ENCODE measurements at regions of chr9 and their contacts with region 1.

Region 1: GRCh38 chr9:31715250-31715649 is 669.2 kb upstream of the ACO1 start:
- DNase-seq: no peak
- H3K4me3 ChIP-seq: no peak overlapping the region
- H3K27ac ChIP-seq: no peak overlapping the region
- H3K4me1 ChIP-seq: no peaks in the 10 kb centered on the region
- CTCF ChIP-seq: no peak

Region 2: DNA sequence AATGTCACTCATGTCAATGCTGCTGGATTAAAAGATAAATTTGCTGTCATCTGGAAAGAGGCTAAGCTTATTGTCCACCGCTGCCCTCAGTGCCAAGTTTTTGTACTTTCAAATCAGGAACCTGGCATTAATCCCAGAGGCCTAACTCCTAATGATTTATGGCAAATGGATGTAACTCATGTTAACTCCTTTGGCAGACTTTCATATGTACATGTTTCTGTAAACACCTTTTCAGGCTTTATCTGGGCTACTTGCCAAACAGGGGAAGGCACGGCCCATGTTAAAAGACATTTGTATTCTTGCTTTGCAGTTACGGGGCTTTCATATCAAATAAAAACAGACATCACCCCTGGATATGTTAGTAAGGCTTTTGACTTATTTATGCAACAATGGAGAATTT is 61.2 kb after region 1 on chr9:
- CTCF ChIA-PET with region 1: no interaction called
- POLR2A ChIA-PET with region 1: no interaction called
- intact Hi-C with region 1: loop called (anchors 10 kb)
- DNase-seq: no peak
- H3K4me3 ChIP-seq: no peak overlapping the region
- H3K27ac ChIP-seq: no peak overlapping the region
- H3K4me1 ChIP-seq: no peaks in the 10 kb centered on the region
- CTCF ChIP-seq: no peak

Measured in OCI-LY7 (cell line).